ENCODE measurements at regions of chr5 and their contacts with region 1.

Region 1: DNA sequence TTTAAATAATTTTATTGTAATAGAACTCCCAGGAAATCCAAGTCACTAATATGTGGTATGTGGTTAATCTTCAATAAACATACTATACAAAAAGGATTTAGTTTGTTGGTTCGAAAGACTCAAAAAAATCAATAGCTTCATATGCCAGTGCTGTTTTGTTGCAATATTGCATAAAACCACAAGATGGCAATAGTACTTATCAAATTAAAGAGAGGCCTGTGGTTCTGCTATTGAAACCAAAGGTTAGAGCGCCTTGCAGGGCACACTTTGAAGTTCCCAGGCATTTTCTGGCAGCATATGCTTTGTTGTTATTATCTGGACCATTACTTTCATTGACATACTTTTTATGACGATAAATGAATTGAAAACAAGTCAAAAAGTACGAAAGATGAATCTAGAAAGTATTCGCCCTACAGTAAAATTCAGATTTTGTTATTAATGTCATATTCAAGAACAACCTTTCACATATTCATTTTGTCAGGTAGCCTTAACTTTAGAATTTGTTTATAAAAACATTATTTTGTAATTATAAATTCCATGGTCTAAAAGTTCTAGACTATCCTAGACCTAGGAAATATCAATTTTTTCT is 316.3 kb downstream of the MCTP1 start:
- DNase-seq: peak; percentile 46 to 68
- H3K4me3 ChIP-seq: no peak overlapping the region
- H3K4me3 Mint-ChIP-seq: no peak overlapping the region
- H3K27ac Mint-ChIP-seq: no peak overlapping the region
- H3K4me1 ChIP-seq: no peaks in the 10 kb centered on the region
- H3K4me1 Mint-ChIP-seq: no peaks in the 10 kb centered on the region
- H3K27me3 ChIP-seq: no peaks in the 10 kb centered on the region
- H3K27me3 Mint-ChIP-seq: peaks cover 9% of the 10 kb centered on the region
- CTCF ChIP-seq: peak; percentile 66 to 75

Region 2: GRCh38 chr5:94595281-94595840 is 373.2 kb before region 1 on chr5:
- CTCF ChIA-PET with region 1: no interaction called
- POLR2A ChIA-PET with region 1: no interaction called
- intact Hi-C with region 1: no loop called
- DNase-seq: no peak
- H3K4me3 ChIP-seq: no peak overlapping the region
- H3K4me3 Mint-ChIP-seq: no peak overlapping the region
- H3K27ac Mint-ChIP-seq: no peak overlapping the region
- H3K4me1 ChIP-seq: no peaks in the 10 kb centered on the region
- H3K4me1 Mint-ChIP-seq: no peaks in the 10 kb centered on the region
- H3K27me3 ChIP-seq: no peaks in the 10 kb centered on the region
- H3K27me3 Mint-ChIP-seq: no peaks in the 10 kb centered on the region
- CTCF ChIP-seq: no peak

Region 3: GRCh38 chr5:95178046-95178651 is 209.5 kb after region 1 on chr5:
- CTCF ChIA-PET with region 1: no interaction called
- POLR2A ChIA-PET with region 1: no interaction called
- intact Hi-C with region 1: loop called (anchors 1 kb)
- DNase-seq: peak; percentile 20 to 35
- H3K4me3 ChIP-seq: no peak overlapping the region
- H3K4me3 Mint-ChIP-seq: no peak overlapping the region
- H3K27ac Mint-ChIP-seq: no peak overlapping the region
- H3K4me1 ChIP-seq: no peaks in the 10 kb centered on the region
- H3K4me1 Mint-ChIP-seq: no peaks in the 10 kb centered on the region
- H3K27me3 ChIP-seq: no peaks in the 10 kb centered on the region
- H3K27me3 Mint-ChIP-seq: no peaks in the 10 kb centered on the region
- CTCF ChIP-seq: no peak

Region 4: GRCh38 chr5:95261437-95262175 is 293.0 kb after region 1 on chr5:
- CTCF ChIA-PET with region 1: interaction called, 19 read pairs
- POLR2A ChIA-PET with region 1: no interaction called
- intact Hi-C with region 1: loop called (anchors 1 kb)
- DNase-seq: peak in 1 of 2 experiments; percentile 34
- H3K4me3 ChIP-seq: no peak overlapping the region
- H3K4me3 Mint-ChIP-seq: no peak overlapping the region
- H3K27ac Mint-ChIP-seq: no peak overlapping the region
- H3K4me1 ChIP-seq: peaks cover 26% of the 10 kb centered on the region
- H3K4me1 Mint-ChIP-seq: peaks cover 13% of the 10 kb centered on the region
- H3K27me3 ChIP-seq: no peaks in the 10 kb centered on the region
- H3K27me3 Mint-ChIP-seq: no peaks in the 10 kb centered on the region
- CTCF ChIP-seq: peak; percentile 41 to 54

Region 5: DNA sequence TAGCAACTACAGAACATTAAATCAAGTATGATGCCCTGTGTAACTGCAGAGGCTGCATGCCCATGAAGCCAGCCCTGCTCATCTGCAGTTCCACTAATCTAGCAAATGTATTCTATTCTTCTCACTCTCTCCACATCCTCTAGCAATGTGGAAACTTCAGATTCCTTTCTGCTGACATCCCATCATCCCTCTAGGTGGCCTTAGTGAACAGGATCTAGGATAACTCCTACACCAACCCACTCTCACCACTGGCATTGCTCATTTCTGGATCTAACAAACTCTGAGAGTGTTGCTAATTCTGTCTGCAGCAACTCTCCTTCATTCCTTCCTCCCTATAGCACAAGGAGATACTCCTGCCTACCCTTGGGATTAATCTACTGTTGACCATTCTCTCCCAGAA is 503.3 kb after region 1 on chr5:
- CTCF ChIA-PET with region 1: no interaction called
- POLR2A ChIA-PET with region 1: no interaction called
- intact Hi-C with region 1: loop called (anchors 10 kb)
- DNase-seq: no peak
- H3K4me3 ChIP-seq: no peak overlapping the region
- H3K4me3 Mint-ChIP-seq: no peak overlapping the region
- H3K27ac Mint-ChIP-seq: peak overlapping the region; percentile 8
- H3K4me1 ChIP-seq: no peaks in the 10 kb centered on the region
- H3K4me1 Mint-ChIP-seq: peaks cover 11% of the 10 kb centered on the region
- H3K27me3 ChIP-seq: no peaks in the 10 kb centered on the region
- H3K27me3 Mint-ChIP-seq: no peaks in the 10 kb centered on the region
- CTCF ChIP-seq: no peak

Measured in Caco-2 (cell line).